A549 (cell line): ENCODE measurements at regions of chr12 and their contacts with region 1.

Region 1: GRCh38 chr12:92899388-92900001 is 29.6 kb downstream of the EEA1 start:
- DNase-seq: peak; percentile 82 to 96
- ATAC-seq: peak; percentile 99 to 100
- H3K4me3 ChIP-seq: no peak overlapping the region; the same call in 2 of the 3 replicates
- H3K27ac ChIP-seq: peak overlapping the region; percentile 83 to 87
- H3K4me1 ChIP-seq: peaks cover 27% of the 10 kb centered on the region
- CTCF ChIP-seq: no peak
- EP300 ChIP-seq: peak; percentile 39 to 65; a peak in 2 of 5 replicates
- POLR2A ChIP-seq: no peak
- RAD21 ChIP-seq: 0 out of 5 replicates have a peak, but pooled peaks of 1 of the 2 experiments have one; percentile 22

Region 2: DNA sequence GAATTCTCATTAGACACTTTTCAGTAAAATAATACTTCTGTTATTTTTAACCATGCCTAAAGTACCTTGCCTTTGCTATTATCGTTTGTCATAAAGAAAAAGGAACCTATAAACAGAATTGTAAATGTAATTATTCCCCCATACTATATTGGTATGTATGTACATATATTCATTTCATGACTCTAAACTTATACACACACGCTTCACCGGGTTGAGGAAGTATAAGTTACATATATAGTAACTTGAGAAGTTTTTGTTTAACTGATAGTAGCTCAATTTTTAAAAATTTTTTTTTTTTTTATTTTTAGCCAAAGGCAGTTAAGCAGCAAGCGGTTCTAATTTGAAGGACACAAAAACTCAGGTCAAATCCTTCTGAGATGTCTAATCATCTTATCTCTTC is 89.1 kb before region 1 on chr12:
- CTCF ChIA-PET with region 1: no interaction called
- POLR2A ChIA-PET with region 1: no interaction called
- DNase-seq: no peak
- ATAC-seq: no peak
- H3K4me3 ChIP-seq: no peak overlapping the region
- H3K27ac ChIP-seq: no peak overlapping the region
- H3K4me1 ChIP-seq: no peaks in the 10 kb centered on the region
- CTCF ChIP-seq: no peak
- EP300 ChIP-seq: no peak
- POLR2A ChIP-seq: no peak
- RAD21 ChIP-seq: no peak

Region 3: DNA sequence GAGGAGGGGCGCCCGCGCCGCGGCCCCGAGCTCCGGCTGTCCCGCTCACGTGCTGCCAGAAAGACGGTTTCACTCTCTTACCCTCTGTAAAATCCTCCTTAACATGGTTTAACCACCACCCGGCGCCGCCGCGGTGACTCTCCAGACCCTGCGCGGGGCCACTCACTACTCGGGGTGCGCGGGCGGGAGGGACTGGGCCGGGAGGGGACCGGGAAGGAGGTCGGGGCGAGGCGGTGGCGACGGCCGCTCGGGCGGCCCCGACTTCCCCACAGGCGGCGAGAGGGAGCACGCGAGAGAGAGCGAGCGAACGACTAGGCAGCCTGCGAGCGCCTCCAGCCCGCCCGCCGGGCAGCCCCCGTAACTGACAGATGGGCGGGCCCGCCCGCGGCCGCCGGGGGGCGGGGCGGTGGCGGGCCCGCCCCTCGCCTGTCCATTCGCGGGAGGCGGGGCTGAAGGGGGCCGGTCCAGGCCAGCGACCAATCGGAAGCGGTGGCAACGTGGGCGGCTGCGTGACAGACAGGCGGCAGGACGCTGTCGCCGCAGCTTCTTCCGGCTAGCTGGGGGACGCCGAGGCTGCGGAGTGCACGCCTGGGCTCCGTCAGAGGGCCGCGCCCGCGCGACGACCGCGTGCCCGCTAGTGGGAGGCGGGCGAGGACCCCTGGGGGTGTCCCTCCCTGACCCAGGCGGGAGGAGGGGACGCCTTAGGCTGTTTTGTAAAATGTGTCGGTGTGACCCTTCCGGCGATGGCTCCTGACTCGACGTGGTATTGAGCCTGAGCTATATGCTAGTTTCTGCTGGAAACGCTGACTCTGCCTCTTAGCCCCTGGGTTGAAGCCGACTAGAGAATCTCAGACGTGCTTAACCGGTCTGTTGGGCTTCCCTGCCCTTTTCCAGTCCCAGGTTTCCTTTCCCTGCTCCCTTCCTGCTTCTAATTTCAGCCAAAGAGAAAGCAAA is 29.7 kb after region 1 on chr12 and contains the start of gene EEA1:
- CTCF ChIA-PET with region 1: interaction called, 6 read pairs
- POLR2A ChIA-PET with region 1: interaction called, 36 read pairs
- DNase-seq: peak; percentile 88 to 98
- ATAC-seq: peak; percentile 88 to 94
- H3K4me3 ChIP-seq: peak within 1 kb of the TSS; percentile 86
- H3K27ac ChIP-seq: peak within 1 kb of the TSS; percentile 91 to 99
- H3K4me1 ChIP-seq: peaks cover 23% of the 10 kb centered on the region
- CTCF ChIP-seq: peak; percentile 25; the same call in 2 of the 3 replicates
- EP300 ChIP-seq: no peak
- POLR2A ChIP-seq: peak; percentile 83
- RAD21 ChIP-seq: peak; percentile 27 to 59; a peak in 4 of 5 replicates
- polyA plus RNA-seq, gene EEA1: 8.1 and 8.3 TPM in 2 replicates